Activated T-helper 1 cell treated with anti-CD3 and anti-CD28 coated beads, Interleukin-12 subunit alpha, Interleukin-12 subunit beta, Interleukin-2, Interleukin-4 antibody, amounts not matched to agents 30 ng/mL and 10 ng/mL and 1 ng/mL, durations not matched to agents 14 hours and 24 hours and 36 hours (primary cell): ENCODE measurements at regions of chr3 and their contacts with region 1.

Region 1: DNA sequence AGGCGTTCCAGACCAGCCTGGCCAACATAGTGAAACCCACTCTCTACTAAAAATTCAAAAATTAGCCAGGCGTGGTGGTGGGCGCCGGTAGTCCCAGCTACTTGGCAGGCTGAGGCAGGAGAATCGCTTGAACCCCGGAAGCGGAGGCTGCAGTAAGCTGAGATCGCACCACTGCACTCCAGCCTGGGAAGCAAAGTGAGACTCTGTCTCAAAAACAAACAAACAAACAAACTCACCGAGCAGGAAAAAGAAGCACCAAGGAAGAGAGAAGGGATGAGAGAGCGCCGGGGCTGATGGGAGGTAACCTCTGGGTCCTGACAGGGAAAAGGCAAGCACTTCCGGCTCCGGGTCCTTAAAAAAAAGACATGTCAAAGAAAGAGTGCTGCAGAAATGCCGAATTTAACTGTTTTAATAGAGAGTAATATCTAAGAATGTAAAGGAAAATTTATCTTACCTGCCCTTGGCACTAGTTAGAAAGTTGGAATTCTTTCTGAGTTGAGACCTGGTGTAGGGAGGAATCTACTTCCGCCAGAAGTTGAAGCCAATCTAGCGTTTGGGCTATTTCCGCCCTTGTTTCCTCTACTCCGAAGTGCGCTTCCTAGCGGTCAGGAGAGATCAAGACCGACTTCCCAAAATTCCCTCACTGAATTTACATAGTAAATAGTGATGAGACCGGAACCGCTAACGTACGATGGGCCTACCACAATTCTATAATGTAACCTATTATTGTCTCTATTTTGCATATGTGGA is 29.1 kb downstream of the EFCAB12 start:
- DNase-seq: peak; percentile 73
- H3K4me3 Mint-ChIP-seq: peak overlapping the region; percentile 96
- H3K27ac Mint-ChIP-seq: peak overlapping the region; percentile 94
- H3K4me1 Mint-ChIP-seq: peaks cover 23% of the 10 kb centered on the region
- H3K27me3 Mint-ChIP-seq: no peaks in the 10 kb centered on the region

Region 2: DNA sequence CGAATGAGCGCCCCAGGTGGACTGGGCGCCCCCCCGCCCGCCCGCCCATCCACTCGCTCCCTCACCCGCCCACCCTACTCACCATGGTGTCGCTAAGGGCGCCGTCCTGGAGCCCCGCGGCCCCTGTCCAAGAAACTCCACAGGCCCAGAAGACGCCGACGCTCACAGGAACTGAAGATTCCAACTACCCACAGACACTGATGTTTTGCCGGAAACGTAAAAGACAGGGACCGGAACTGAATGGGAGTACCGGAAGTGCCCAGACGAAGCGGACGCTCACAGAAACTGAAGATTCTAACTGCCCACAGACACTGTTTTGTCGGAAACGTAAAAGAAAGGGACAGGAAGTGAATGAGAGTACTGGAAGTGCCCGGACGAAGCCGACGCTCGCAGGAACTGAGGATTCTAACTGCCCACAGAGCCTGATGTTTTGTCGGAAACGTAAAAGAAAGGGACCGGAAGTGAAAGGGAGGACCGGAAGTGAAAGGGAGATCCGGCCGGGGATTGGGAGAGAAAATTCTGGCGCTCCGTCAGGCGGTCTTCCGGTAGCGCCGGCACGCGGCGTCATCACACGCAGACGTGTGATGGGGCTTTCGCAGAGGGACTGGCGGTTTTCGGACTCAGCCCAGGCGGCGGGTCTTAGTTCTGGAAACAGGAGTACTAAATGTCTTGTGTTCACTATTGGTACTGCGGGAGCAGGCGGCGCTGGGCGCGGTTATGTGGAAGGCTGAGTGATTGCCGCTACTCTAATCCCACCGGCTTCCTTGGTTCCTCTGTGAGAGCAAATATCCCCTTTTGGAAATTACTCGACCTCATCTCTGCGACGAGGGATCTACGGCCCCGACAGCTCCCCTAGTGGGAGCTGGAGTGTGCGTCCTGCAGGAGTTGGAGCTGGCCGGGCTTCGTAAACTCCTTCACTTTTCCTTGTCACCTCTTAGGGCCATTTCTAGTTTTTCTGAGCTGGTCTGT is 238.1 kb before region 1 on chr3 and contains the start of gene ISY1:
- intact Hi-C with region 1: loop called (anchors 1 kb)
- DNase-seq: peak; percentile 88
- H3K4me3 Mint-ChIP-seq: peak within 1 kb of the TSS; percentile 97
- H3K27ac Mint-ChIP-seq: peak within 1 kb of the TSS; percentile 99
- H3K4me1 Mint-ChIP-seq: peaks cover 34% of the 10 kb centered on the region
- H3K27me3 Mint-ChIP-seq: no peaks in the 10 kb centered on the region
- total RNA-seq, gene ISY1: 72.3 and 75.4 TPM in 2 replicates

Region 3: GRCh38 chr3:129278439-129278970 is 120.8 kb before region 1 on chr3 and contains the start of gene HMCES:
- intact Hi-C with region 1: loop called (anchors 1 kb)
- DNase-seq: peak; percentile 92
- H3K4me3 Mint-ChIP-seq: peak within 1 kb of the TSS; percentile 93
- H3K27ac Mint-ChIP-seq: peak within 1 kb of the TSS; percentile 97
- H3K4me1 Mint-ChIP-seq: peaks cover 48% of the 10 kb centered on the region
- H3K27me3 Mint-ChIP-seq: no peaks in the 10 kb centered on the region
- total RNA-seq, gene HMCES: 59.4 and 61.6 TPM in 2 replicates

Region 4: DNA sequence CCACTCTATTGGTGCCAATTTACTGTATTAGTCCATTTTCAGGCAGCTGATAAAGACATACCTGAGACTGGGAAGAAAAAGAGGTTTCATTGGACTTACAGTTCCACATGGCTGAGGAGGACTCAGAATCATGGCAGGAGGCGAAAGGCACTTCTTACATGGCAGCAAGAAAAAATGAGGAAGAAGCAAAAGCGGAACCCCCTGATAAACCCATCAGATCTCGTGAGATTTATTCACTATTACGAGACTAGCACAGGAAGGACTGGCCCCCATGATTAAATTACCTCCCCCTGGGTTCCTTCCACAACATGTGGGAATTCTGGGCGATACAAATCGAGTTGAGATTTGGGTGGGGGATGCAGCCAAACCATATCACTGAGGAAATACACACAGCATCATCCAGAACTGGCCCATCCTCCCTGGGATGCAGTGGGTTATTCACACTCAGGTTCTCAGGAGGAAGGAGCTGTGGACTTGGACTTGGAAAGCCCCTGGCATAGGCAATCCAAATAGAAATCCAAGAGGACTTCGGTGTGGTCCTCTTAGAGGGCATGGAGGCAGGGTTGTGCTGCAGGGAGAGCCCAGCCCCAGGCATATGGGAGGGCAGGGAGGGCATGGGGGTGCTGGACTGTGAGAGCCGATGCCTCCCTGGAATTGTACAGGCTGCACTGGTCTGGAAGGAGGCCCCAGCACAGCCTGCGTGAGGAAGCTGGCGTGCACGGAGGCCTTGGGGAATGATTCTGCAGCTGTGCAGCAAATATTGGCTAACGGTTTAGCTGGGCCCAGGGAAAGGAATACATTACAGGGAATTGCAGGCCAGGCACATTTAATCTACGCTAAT is 33.8 kb before region 1 on chr3:
- intact Hi-C with region 1: no loop called
- DNase-seq: no peak
- H3K4me3 Mint-ChIP-seq: no peak overlapping the region
- H3K27ac Mint-ChIP-seq: no peak overlapping the region
- H3K4me1 Mint-ChIP-seq: no peaks in the 10 kb centered on the region
- H3K27me3 Mint-ChIP-seq: no peaks in the 10 kb centered on the region

Region 5: GRCh38 chr3:129434140-129434539 is 34.8 kb after region 1 on chr3:
- intact Hi-C with region 1: no loop called
- DNase-seq: no peak
- H3K4me3 Mint-ChIP-seq: no peak overlapping the region
- H3K27ac Mint-ChIP-seq: no peak overlapping the region
- H3K4me1 Mint-ChIP-seq: peaks cover 70% of the 10 kb centered on the region
- H3K27me3 Mint-ChIP-seq: no peaks in the 10 kb centered on the region

Region 6: GRCh38 chr3:129893581-129894070 is 494.3 kb after region 1 on chr3 and contains the start of gene TMCC1:
- intact Hi-C with region 1: loop called (anchors 1 kb)
- DNase-seq: peak; percentile 83
- H3K4me3 Mint-ChIP-seq: peak within 1 kb of the TSS; percentile 91
- H3K27ac Mint-ChIP-seq: peak within 1 kb of the TSS; percentile 89
- H3K4me1 Mint-ChIP-seq: peaks cover 47% of the 10 kb centered on the region
- H3K27me3 Mint-ChIP-seq: no peaks in the 10 kb centered on the region
- total RNA-seq, gene TMCC1: 17.1 and 22.4 TPM in 2 replicates